ENCODE measurements at regions of chr6 and their contacts with region 1.

Region 1: GRCh38 chr6:52419809-52420670 is at the start of gene EFHC1:
- DNase-seq: peak; percentile 96 to 99
- H3K4me3 ChIP-seq: peak within 1 kb of the TSS; percentile 71 to 95
- H3K27ac ChIP-seq: peak within 1 kb of the TSS; percentile 82 to 84
- H3K4me1 ChIP-seq: peaks cover 2 to 7% of the 10 kb centered on the region in 2 donors
- H3K27me3 ChIP-seq: no peaks in the 10 kb centered on the region
- CTCF ChIP-seq: no peak
- total RNA-seq, gene EFHC1: 7.3 TPM

Region 2: GRCh38 chr6:52284460-52285176 is 135.4 kb before region 1 on chr6 and contains the start of gene MCM3:
- intact Hi-C with region 1: loop called (anchors 1 kb)
- DNase-seq: peak; percentile 96 to 99
- H3K4me3 ChIP-seq: peak within 1 kb of the TSS; percentile 75 to 100
- H3K27ac ChIP-seq: peak within 1 kb of the TSS; percentile 71 to 72
- H3K4me1 ChIP-seq: peaks cover 10 to 11% of the 10 kb centered on the region in 2 donors
- H3K27me3 ChIP-seq: no peaks in the 10 kb centered on the region
- CTCF ChIP-seq: no peak
- total RNA-seq, gene MCM3: 44.6 TPM

Region 3: DNA sequence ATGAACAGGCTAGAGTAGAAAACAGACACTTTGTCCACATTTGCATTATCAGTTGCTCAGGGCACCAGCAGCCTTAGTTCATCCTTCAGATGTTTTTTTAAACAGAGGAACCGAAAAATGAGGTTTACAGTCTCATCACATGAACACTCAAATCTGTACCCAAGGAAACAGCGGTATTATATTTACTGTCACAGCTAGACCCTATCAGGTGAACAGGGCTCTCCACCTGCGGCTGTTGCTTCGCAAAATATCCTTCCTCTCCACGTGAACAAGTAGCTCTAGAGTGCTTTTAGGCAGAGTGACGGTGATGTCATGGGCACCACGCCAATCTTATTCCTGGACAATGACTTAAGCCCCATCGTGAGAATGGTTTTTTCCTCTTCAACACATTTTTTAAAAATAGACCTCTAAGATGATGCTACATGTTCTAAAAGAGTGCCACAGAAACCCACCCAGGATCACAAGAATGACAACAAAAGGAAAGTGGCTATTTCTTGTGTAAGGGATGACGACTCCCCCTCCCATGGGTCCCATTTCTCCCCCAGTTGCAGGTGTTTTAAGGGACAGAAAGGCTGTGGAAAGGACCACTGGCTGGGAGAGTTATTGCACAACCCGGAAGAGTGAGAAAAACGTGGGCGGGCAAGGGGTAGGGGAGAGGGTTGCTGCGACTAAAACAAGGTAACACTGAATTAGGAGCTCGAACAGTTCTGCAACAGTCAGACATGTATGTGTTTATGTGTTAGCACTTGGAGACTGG is 77.8 kb after region 1 on chr6:
- intact Hi-C with region 1: loop called (anchors 1 kb)
- DNase-seq: peak in 1 of 2 donors; percentile 86
- H3K4me3 ChIP-seq: no peak overlapping the region
- H3K27ac ChIP-seq: peak overlapping the region; percentile 78 to 90
- H3K4me1 ChIP-seq: peaks cover 11 to 31% of the 10 kb centered on the region in 2 donors
- H3K27me3 ChIP-seq: no peaks in the 10 kb centered on the region
- CTCF ChIP-seq: no peak

Region 4: DNA sequence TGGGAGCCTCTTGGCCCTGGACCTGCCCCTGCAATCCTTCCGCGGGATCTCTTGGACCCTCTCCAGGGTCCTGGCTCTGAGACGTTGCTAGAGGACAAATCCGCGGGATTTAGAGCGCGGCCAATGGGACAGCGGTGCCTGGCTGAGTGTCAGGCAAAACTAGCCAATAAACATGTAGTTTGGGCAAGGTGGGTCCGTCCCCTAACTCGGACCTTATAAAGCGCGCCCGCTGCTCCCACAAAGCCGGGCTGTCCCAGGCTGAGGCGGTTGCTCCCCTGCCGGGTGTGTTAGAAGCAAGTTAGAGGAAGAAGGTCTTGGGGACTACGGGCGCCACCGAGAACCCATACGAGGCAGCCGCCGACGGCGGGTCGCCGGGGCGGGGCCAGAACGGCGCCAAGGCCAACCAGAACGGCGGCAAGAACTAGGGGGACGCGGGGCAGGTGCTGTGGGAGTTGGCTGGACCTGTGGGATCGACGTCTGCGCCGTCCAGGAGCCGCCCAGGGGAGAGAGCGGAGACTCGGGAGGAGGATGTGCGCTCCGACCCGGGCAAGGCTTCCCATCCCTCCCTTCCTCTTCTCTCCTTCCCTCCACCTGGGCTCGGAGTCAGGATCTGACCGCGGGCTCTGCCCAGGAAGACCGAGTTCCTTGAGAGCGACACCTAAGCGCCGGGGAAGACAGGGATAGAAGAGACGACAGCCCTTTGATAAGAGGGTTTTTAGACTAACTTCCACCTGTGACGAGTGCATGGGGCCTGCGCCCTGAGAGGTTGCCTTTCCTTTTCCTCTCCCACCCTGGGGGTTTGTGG is 244.3 kb after region 1 on chr6:
- intact Hi-C with region 1: loop called (anchors 1 kb)
- DNase-seq: peak; percentile 58 to 96
- H3K4me3 ChIP-seq: peak overlapping the region; percentile 80 to 86
- H3K27ac ChIP-seq: peak overlapping the region; percentile 72 to 78
- H3K4me1 ChIP-seq: peaks cover 4 to 12% of the 10 kb centered on the region in 2 donors
- H3K27me3 ChIP-seq: no peaks in the 10 kb centered on the region
- CTCF ChIP-seq: no peak

Region 5: DNA sequence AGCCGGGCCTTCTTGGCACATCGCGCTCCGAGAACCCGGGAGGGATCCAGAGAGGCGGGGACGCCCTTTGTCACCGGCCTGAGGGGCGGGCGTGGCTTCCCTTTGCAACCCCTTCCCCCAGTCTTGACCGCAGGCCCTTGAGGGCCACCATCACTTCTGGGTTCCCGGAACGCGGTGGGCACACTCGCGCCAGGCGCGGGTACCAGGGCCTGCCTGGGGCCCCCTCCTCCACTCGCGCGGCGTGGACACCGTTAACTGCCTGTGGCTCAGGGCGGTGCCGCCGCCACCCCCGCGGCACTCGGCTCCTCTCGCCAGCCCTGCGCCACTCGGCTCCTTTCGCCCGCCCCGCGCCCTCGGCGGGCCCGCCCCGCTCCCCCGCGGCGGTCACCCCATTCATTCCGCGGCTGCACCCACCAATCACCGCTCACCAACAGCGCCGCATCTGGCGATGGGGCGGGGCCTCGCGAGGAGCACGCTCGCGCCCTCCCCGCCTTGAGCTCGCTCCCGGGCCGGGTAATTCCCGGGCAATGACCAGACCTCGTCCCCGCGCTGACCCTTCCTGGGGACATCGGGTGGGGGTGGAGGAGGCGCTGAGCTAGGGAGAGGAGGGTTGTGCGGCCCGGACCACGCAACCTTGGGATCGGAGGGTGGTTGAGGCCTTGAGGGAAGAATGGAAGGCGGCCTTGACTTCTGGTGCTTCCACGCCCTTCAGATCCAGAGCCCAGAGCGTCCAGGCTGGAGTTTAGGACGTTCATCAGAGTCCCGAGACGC is 939.2 kb after region 1 on chr6:
- intact Hi-C with region 1: loop called (anchors 10 kb)
- DNase-seq: peak; percentile 87 to 98
- H3K4me3 ChIP-seq: peak overlapping the region; percentile 53 to 80
- H3K27ac ChIP-seq: peak overlapping the region; percentile 78 to 94
- H3K4me1 ChIP-seq: peaks cover 0 to 4% of the 10 kb centered on the region in 2 donors
- H3K27me3 ChIP-seq: no peaks in the 10 kb centered on the region
- CTCF ChIP-seq: no peak